H1 (cell line): ENCODE measurements at regions of chr17 and their contacts with region 1.

Region 1: GRCh38 chr17:21025451-21025850 is 17.4 kb downstream of the USP22 start:
- DNase-seq: no peak
- H3K4me3 ChIP-seq: no peak overlapping the region
- H3K27ac ChIP-seq: no peak overlapping the region
- H3K4me1 ChIP-seq: peaks cover 0 to 6% (median 0%) of the 10 kb centered on the region in 4 experiments; a peak in 2 of 7 replicates
- H3K27me3 ChIP-seq: no peaks in the 10 kb centered on the region
- CTCF ChIP-seq: no peak
- EP300 ChIP-seq: no peak
- POLR2A ChIP-seq: no peak
- RAD21 ChIP-seq: no peak

Region 2: DNA sequence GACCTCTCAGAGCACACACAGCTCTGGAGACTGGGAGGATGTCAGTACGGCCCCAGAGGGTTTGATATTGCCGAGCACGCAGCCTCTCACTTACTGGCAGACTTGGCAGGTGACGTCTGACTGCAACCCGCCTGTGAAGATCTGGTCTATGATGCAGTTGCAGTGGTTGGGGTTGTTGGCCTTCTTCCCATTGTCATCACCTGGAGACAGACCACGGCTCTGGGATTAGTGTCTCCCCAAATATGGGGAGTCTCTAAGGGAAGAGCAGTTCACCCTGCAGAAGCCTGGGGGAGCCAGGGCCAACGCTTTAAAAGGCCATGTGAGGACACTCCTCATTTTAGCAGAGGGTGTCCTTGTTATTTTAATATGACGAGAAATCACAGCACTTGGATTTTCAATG is 12.7 kb before region 1 on chr17:
- CTCF ChIA-PET with region 1: interaction called, 4 read pairs
- POLR2A ChIA-PET with region 1: interaction called, 15 read pairs
- DNase-seq: no peak
- H3K4me3 ChIP-seq: no peak overlapping the region
- H3K27ac ChIP-seq: no peak overlapping the region
- H3K4me1 ChIP-seq: no peaks in the 10 kb centered on the region
- H3K27me3 ChIP-seq: no peaks in the 10 kb centered on the region
- CTCF ChIP-seq: no peak
- EP300 ChIP-seq: no peak
- POLR2A ChIP-seq: no peak
- RAD21 ChIP-seq: no peak